ENCODE measurements at regions of chr14 and their contacts with region 1.

Region 1: DNA sequence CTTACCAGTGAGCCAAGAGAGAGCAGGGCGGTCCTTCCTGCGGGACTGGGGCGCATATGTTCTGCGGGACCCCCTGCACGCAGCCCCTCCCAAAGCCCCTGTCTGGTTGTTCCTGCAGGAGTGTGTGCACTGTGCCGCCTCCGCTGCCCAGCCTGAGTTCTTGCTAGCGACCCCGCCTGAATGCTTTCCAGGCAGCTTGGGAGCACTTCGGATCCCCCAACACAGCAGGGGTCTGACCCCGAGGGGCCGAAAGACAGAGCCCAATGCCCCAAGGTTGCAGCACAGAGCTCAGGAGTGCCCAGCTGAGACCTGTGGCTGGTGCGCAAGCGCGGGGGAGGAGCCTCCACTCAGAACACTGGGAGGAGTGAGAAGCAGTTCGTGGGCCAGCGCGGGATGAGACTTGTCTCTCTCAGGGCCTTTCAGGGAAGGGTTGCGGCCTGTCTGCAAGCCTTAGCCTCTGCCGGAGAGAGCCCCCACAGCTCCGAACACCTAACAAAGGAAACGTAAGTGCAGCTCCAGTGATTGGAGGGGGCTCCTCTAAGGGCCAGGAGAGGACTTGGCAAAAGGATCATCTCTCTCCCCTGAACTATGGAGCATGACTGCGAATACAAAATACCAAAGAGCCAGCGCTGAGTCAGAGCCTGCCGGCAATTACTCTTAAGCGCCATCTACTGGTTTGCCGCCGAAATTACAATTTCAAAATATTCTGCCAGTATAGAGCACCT is 50.5 kb downstream of the GTF2A1 start:
- DNase-seq: peak; percentile 86

Region 2: GRCh38 chr14:80941241-80942182 is 228.8 kb before region 1 on chr14 and contains the start of gene CEP128:
- CTCF ChIA-PET with region 1: interaction called, 5 read pairs
- POLR2A ChIA-PET with region 1: interaction called, 10 read pairs
- DNase-seq: peak; percentile 91

Region 3: DNA sequence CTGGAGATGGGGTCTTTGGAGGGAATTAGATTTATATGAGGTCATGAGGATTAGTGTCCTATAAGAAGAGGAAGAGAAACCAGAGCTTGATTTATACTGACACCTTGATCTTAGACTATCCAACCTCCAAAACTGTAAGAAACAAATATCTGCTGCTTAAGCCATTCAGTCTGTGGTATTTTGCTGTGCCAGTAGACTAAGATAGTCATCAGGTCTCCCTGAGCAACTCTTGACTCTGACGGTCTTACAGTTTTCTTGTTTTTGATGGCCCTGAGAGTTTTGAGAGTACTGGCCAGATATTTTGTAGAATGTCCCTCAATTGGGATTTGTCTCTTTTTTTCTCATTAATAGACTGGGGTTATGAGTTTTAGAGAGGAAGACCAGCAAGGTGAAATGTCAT is 163.1 kb before region 1 on chr14:
- CTCF ChIA-PET with region 1: no interaction called
- POLR2A ChIA-PET with region 1: no interaction called
- DNase-seq: no peak

Measured in HEK293T (cell line).